ENCODE measurements at regions of chr10 and their contacts with region 1.

Region 1: DNA sequence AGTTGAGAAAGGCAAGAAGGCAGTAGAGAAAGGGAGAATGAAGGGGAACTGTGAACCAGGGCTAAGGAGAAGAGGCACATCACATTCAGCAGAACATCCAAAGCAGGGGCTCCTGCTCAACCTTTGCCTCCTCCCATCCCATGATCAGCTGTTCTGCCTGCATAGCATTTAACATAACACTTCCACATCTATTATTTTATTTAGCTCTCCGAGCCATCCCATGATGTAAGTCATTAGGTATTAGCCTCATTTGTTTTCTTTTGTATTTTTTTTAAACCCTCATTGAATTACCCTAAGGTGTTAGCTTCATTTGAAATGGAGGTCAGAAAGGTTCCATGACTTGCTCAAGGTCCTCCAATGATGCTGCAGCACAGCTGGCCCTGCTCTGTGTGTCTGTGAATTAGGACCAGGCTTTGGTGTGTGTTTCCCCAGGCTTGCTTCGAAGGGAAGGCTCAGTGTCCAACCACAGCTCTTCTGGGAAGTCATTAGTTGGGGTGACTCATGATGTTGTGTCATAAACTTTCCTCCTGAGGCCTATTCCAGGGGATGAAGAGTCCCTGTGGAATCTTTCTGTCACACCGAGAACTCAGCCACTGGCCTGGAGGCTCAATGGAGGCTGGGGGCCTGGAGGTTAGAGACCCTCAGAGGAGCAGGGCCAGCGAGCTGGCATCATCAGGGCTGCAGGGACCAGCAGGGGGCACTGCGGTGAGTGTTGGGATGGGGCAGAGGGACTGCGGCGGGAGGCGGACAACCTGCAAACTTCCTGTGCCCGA is 16.5 kb downstream of the NPFFR1 start:
- DNase-seq: peak; percentile 99
- ATAC-seq: peak; percentile 97
- H3K4me3 ChIP-seq: no peak overlapping the region
- H3K27ac ChIP-seq: no peak overlapping the region
- H3K4me1 ChIP-seq: peaks cover 16% of the 10 kb centered on the region
- H3K27me3 ChIP-seq: no peaks in the 10 kb centered on the region
- CTCF ChIP-seq: peak; percentile 51

Region 2: GRCh38 chr10:70363971-70364771 is 96.8 kb after region 1 on chr10:
- CTCF ChIA-PET with region 1: interaction called, 21 read pairs
- POLR2A ChIA-PET with region 1: no interaction called
- intact Hi-C with region 1: loop called (anchors 2 kb)
- DNase-seq: peak; percentile 98
- ATAC-seq: peak; percentile 97
- H3K4me3 ChIP-seq: peak overlapping the region; percentile 36; the same call in 1 of the 2 replicates
- H3K27ac ChIP-seq: peak overlapping the region; percentile 14
- H3K4me1 ChIP-seq: peaks cover 14% of the 10 kb centered on the region
- H3K27me3 ChIP-seq: no peaks in the 10 kb centered on the region
- CTCF ChIP-seq: peak; percentile 100

Region 3: DNA sequence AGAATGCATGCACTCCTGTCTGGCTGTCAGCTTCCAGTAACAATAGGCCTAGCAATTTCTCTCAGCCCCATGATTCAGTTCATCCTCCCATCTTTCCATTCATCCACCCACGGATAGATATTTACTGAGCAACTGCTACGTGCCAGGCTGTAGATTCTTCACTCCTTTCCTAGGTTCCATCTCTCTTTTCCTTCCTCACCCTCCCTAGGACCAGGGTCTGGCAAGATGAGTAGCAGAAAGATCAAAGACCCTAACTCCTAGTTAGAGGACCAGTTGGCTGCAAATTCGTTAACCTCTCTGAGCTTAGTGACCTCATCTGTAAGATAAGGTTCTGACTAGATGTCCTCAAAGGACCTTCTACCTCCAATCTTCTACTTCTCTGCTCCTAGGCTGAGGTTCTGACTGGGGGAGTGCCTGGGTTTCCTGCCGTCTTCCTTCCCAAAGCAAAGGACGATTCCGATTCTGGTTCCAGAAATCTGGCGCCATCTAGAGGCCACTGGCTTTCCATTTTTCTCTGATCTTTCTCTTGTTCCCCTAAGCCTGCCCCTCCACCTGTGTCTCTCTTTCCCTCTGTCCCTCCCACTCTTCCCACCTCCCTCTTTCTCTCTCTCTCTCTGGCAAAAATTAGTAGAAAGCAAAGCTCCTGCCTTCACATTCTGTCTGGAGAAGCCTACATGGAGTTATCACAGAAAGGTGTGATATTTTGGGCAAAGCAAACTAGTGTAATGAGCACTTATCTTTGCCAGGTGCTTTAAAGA is 491.6 kb after region 1 on chr10:
- CTCF ChIA-PET with region 1: no interaction called
- POLR2A ChIA-PET with region 1: no interaction called
- intact Hi-C with region 1: no loop called
- DNase-seq: peak; percentile 97
- ATAC-seq: peak; percentile 68
- H3K4me3 ChIP-seq: no peak overlapping the region
- H3K27ac ChIP-seq: no peak overlapping the region
- H3K4me1 ChIP-seq: peaks cover 8% of the 10 kb centered on the region
- H3K27me3 ChIP-seq: no peaks in the 10 kb centered on the region
- CTCF ChIP-seq: peak; percentile 92

Measured in PC-3 (cell line).